Activated naive CD4-positive, alpha-beta T cell treated with anti-CD3 and anti-CD28 coated beads for 36 hours (primary cell): ENCODE measurements at regions of chr3 and their contacts with region 1.

Region 1: DNA sequence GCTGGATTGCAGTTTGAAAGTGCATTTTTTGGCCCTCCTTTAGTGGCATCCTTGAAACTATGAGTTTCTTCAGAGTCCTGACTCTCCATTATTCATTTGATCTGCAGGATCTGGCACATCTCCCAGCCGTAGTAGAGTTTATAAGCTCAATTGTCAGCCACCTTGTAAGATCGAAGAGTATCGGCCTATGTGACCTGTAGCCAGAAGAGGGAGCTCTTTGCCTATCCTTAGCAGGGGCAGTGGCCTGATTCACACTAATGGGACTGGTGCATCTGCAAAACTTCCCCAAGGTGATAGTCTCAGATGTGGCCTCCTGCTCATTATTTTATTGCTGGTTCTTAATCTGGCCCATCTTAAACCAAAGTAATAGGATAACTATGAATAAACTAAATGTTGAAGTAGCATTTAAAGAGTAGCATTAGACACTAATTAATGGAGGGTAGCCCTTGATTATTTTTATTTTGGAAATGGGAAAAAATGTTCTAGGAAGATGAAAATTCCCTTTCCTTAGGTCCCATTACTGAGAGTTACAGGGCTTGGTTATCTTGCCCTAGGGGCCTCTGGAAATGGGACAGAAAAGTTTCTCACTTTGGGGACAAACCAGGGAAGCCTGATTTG is 21.2 kb downstream of the GCSAM start:
- DNase-seq: peak; percentile 79
- H3K4me3 Mint-ChIP-seq: no peak overlapping the region
- H3K27ac Mint-ChIP-seq: no peak overlapping the region
- H3K4me1 Mint-ChIP-seq: peaks cover 17% of the 10 kb centered on the region
- H3K27me3 Mint-ChIP-seq: peaks cover 3% of the 10 kb centered on the region

Region 2: DNA sequence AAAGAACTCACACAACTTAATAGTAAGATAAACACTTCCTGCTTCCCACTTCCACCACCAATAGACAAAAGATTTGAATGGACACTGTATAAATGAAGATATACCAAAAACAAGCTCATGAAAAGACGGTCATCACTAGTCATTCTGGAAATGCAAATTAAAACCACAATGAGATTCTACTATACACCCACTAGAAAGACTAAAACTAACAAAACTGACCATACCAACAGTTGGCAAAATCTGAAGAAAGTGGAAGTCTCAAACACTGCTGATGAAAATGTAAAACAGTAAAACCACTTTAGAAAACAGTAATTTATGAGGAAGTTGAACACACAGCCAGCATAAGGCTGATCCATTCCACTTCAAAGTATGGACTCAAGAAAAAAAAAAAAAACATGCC is 605.5 kb before region 1 on chr3:
- CTCF ChIA-PET with region 1: no interaction called
- intact Hi-C with region 1: no loop called
- DNase-seq: no peak
- H3K4me3 Mint-ChIP-seq: no peak overlapping the region
- H3K27ac Mint-ChIP-seq: no peak overlapping the region
- H3K4me1 Mint-ChIP-seq: no peaks in the 10 kb centered on the region
- H3K27me3 Mint-ChIP-seq: no peaks in the 10 kb centered on the region

Region 3: DNA sequence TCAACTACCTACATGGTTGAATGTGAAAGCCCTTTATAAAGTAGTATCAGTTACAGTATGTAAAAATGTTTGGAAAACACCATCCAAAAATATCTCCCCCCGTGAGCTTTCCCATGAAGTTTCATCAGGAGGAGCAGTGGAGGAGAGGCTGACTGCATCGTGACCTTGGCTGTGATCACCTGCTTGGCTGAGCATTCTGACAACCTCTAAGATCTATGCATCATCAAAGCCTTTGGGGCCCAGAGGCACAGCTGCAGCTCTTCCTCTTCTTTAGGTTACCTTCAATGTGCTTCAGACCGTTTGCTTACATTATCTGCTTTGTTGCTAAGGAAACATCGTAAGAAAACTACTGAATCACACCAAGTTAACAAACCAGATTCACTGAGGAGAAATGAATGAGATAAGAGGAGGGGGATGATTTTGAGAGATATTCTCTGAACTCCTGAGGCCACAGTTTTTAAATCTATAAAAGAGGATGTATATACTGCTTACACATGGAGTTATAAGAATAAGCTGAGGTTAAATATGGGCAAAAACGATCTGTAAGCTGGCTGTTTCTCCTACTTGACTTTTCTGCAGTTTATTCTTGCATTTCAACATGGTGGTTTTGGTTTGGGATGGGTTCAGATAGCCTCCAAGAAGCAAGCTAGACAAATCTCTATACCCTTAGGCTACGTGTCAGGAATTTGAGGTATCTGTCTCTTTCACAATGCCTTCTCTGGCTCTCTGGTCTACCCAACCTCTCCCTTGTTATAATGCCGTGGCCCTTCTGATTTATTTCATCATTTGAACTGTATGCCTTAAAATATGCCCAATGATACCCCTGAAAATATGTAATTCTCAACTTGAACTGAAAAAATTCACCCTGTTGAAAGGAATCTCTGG is 17.2 kb after region 1 on chr3:
- CTCF ChIA-PET with region 1: interaction called, 19 read pairs
- intact Hi-C with region 1: loop called (anchors 1 kb)
- DNase-seq: peak; percentile 82
- H3K4me3 Mint-ChIP-seq: peak overlapping the region; percentile 4
- H3K27ac Mint-ChIP-seq: peak overlapping the region; percentile 76
- H3K4me1 Mint-ChIP-seq: peaks cover 74% of the 10 kb centered on the region
- H3K27me3 Mint-ChIP-seq: no peaks in the 10 kb centered on the region

Region 4: DNA sequence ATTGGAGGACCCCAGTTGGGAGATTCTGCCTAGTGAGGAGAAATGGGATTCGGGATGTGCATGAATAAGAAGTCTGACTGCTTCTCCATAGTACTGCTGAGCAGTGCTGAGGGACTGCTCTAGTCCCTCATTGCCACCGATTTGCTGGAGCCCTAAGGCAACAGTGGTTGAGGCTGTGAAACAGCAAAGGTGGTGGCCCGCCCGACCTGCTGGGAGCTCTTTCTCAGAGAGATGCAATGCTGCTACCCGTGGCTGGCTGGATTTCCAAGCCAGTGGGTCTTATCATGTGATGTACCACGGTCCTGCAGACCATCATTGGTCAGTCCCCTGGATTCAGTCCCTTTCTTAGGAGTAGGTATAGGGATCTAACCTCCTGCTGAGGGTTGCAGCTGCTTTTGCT is 63.8 kb after region 1 on chr3:
- CTCF ChIA-PET with region 1: interaction called, 4 read pairs
- intact Hi-C with region 1: loop called (anchors 1 kb)
- DNase-seq: no peak
- H3K4me3 Mint-ChIP-seq: no peak overlapping the region
- H3K27ac Mint-ChIP-seq: no peak overlapping the region
- H3K4me1 Mint-ChIP-seq: no peaks in the 10 kb centered on the region
- H3K27me3 Mint-ChIP-seq: peaks cover 2% of the 10 kb centered on the region

Region 5: GRCh38 chr3:112321867-112322649 is 210.2 kb after region 1 on chr3:
- CTCF ChIA-PET with region 1: interaction called, 17 read pairs
- intact Hi-C with region 1: loop called (anchors 1 kb)
- DNase-seq: no peak
- H3K4me3 Mint-ChIP-seq: no peak overlapping the region
- H3K27ac Mint-ChIP-seq: no peak overlapping the region
- H3K4me1 Mint-ChIP-seq: peaks cover 13% of the 10 kb centered on the region
- H3K27me3 Mint-ChIP-seq: peaks cover 9% of the 10 kb centered on the region

Region 6: GRCh38 chr3:112327371-112327951 is 215.6 kb after region 1 on chr3:
- CTCF ChIA-PET with region 1: interaction called, 8 read pairs
- intact Hi-C with region 1: loop called (anchors 1 kb)
- DNase-seq: peak; percentile 65
- H3K4me3 Mint-ChIP-seq: no peak overlapping the region
- H3K27ac Mint-ChIP-seq: no peak overlapping the region
- H3K4me1 Mint-ChIP-seq: peaks cover 13% of the 10 kb centered on the region
- H3K27me3 Mint-ChIP-seq: peaks cover 9% of the 10 kb centered on the region

Region 7: GRCh38 chr3:112531358-112531781 is 419.5 kb after region 1 on chr3:
- CTCF ChIA-PET with region 1: interaction called, 4 read pairs
- intact Hi-C with region 1: loop called (anchors 1 kb)
- DNase-seq: no peak
- H3K4me3 Mint-ChIP-seq: no peak overlapping the region
- H3K27ac Mint-ChIP-seq: peak overlapping the region; percentile 62
- H3K4me1 Mint-ChIP-seq: peaks cover 11% of the 10 kb centered on the region
- H3K27me3 Mint-ChIP-seq: no peaks in the 10 kb centered on the region